ENCODE measurements at regions of chr5 and their contacts with region 1.

Region 1: GRCh38 chr5:115069087-115069968 is 100.4 kb downstream of the TRIM36 start:
- DNase-seq: peak; percentile 51
- ATAC-seq: peak; percentile 90
- H3K4me3 ChIP-seq: no peak overlapping the region
- H3K27ac ChIP-seq: no peak overlapping the region
- H3K4me1 ChIP-seq: peaks cover 0 to 7% of the 10 kb centered on the region in 2 experiments; a peak in 2 of 4 replicates
- H3K27me3 ChIP-seq: peaks cover 3% of the 10 kb centered on the region; the same call in 1 of the 2 replicates
- CTCF ChIP-seq: peak; percentile 55 to 87 (median 87); a peak in 5 of 6 replicates
- POLR2A ChIP-seq: no peak
- RAD21 ChIP-seq: peak; percentile 88

Region 2: GRCh38 chr5:113612060-113612496 is 1457.2 kb before region 1 on chr5:
- CTCF ChIA-PET with region 1: interaction called, 19 read pairs
- POLR2A ChIA-PET with region 1: no interaction called
- RAD21 ChIA-PET with region 1: interaction called in 1 of 2 experiments, 8 read pairs
- intact Hi-C with region 1: loop called (anchors 2 kb)
- DNase-seq: peak; percentile 13
- ATAC-seq: peak; percentile 82
- H3K4me3 ChIP-seq: no peak overlapping the region
- H3K27ac ChIP-seq: no peak overlapping the region
- H3K4me1 ChIP-seq: peaks cover 0 to 5% of the 10 kb centered on the region in 2 experiments; a peak in 1 of 4 replicates
- H3K27me3 ChIP-seq: no peaks in the 10 kb centered on the region
- CTCF ChIP-seq: peak; percentile 22 to 73 (median 54); a peak in 4 of 6 replicates
- POLR2A ChIP-seq: no peak
- RAD21 ChIP-seq: peak; percentile 78

Region 3: DNA sequence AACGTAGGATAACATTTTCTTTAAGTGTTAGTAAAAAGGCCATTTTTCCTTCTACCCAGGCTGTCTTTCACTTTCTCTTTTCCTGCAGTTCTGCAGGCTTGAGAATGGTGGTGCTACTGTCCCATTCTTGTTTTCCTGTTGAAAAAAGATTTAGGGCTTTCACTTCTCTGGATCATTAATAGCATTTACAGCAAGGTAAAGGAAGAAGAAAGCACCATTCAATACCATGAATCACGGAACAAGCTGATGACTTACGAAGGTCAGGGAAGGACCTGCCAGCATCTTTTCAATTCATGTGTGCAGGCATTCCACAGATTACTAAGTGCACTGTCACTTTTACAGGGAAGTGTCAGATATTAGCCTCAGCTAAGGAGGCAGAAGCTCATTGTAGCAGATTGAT is 1263.1 kb before region 1 on chr5:
- CTCF ChIA-PET with region 1: no interaction called
- POLR2A ChIA-PET with region 1: no interaction called
- RAD21 ChIA-PET with region 1: no interaction called
- intact Hi-C with region 1: loop called (anchors 5 kb)
- DNase-seq: no peak
- ATAC-seq: peak; percentile 63
- H3K4me3 ChIP-seq: no peak overlapping the region
- H3K27ac ChIP-seq: no peak overlapping the region
- H3K4me1 ChIP-seq: no peaks in the 10 kb centered on the region
- H3K27me3 ChIP-seq: peaks cover 39% of the 10 kb centered on the region
- CTCF ChIP-seq: peak; percentile 35 to 62 (median 40); a peak in 5 of 6 replicates
- POLR2A ChIP-seq: no peak
- RAD21 ChIP-seq: peak; percentile 64

Region 4: GRCh38 chr5:114449860-114450421 is 619.4 kb before region 1 on chr5:
- CTCF ChIA-PET with region 1: interaction called, 9 read pairs
- POLR2A ChIA-PET with region 1: no interaction called
- RAD21 ChIA-PET with region 1: no interaction called
- intact Hi-C with region 1: loop called (anchors 1 kb)
- DNase-seq: peak; percentile 21
- ATAC-seq: peak; percentile 98
- H3K4me3 ChIP-seq: no peak overlapping the region
- H3K27ac ChIP-seq: no peak overlapping the region
- H3K4me1 ChIP-seq: no peaks in the 10 kb centered on the region
- H3K27me3 ChIP-seq: 0 out of 2 replicates have a peak, but pooled peaks cover 13% of the 10 kb centered on the region
- CTCF ChIP-seq: peak; percentile 62 to 85 (median 79); a peak in 5 of 6 replicates
- POLR2A ChIP-seq: no peak
- RAD21 ChIP-seq: peak; percentile 81

Region 5: DNA sequence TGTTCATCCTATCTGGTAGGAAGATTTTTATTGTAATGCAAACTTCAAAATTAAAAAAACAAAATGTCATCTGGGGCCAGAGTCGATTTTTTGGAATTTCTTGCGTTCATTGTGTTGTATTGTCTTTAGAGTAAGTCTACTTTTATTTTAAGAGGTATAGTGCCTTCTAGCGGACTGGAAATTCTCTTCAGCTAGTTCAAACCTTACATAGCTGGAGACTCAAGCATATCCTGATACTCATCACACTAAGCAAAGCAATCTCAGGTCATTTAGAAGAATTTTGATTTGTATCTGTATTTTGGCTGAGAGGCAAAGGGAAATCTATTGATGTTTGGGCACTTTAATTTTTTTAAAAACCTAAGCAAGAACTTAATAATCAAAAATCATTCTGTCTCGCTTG is 266.0 kb before region 1 on chr5:
- CTCF ChIA-PET with region 1: interaction called, 10 read pairs
- POLR2A ChIA-PET with region 1: no interaction called
- RAD21 ChIA-PET with region 1: no interaction called
- intact Hi-C with region 1: loop called (anchors 5 kb)
- DNase-seq: peak; percentile 8
- ATAC-seq: peak; percentile 73
- H3K4me3 ChIP-seq: no peak overlapping the region
- H3K27ac ChIP-seq: no peak overlapping the region
- H3K4me1 ChIP-seq: no peaks in the 10 kb centered on the region
- H3K27me3 ChIP-seq: 0 out of 2 replicates have a peak, but pooled peaks cover 4% of the 10 kb centered on the region
- CTCF ChIP-seq: 0 out of 6 replicates have a peak, but pooled peaks of 2 of the 3 experiments have one; percentile 11 to 13
- POLR2A ChIP-seq: no peak
- RAD21 ChIP-seq: 0 out of 2 replicates have a peak, but pooled peaks have one; percentile 23

Measured in HCT116 (cell line).